Ascending aorta (tissue), 2 donors: ENCODE measurements at regions of chr3 and their contacts with region 1.

Region 1: GRCh38 chr3:130737622-130738021 is 9.0 kb downstream of the PIK3R4 start:
- DNase-seq: no peak
- H3K4me3 ChIP-seq: no peak overlapping the region
- H3K27ac ChIP-seq: no peak overlapping the region
- H3K4me1 ChIP-seq: peaks cover 0 to 2% of the 10 kb centered on the region in 2 donors
- H3K27me3 ChIP-seq: no peaks in the 10 kb centered on the region
- CTCF ChIP-seq: no peak

Region 2: GRCh38 chr3:130644628-130645253 is 92.9 kb before region 1 on chr3:
- intact Hi-C with region 1: no loop called
- DNase-seq: no peak
- H3K4me3 ChIP-seq: no peak overlapping the region
- H3K27ac ChIP-seq: no peak overlapping the region
- H3K4me1 ChIP-seq: no peaks in the 10 kb centered on the region
- H3K27me3 ChIP-seq: no peaks in the 10 kb centered on the region
- CTCF ChIP-seq: no peak

Region 3: DNA sequence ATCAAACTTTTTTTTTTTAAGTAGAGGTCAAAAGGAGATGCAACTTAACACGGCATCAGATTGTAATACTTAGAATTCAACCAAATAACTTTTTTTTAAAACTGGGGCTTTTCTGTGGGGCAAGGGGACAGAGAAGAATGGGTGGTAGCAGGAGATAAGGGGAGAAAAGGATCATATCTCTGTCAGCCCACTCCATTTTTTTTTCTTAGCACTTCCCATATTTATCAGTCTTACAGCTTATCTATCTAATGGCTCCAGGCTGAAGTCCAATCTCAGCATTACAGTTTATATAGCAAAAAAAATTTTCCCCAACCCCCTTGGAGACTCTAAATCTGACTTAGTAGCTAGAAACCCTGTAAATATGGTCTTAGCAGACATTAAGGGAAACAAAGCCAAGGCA is 60.3 kb before region 1 on chr3:
- intact Hi-C with region 1: no loop called
- DNase-seq: no peak
- H3K4me3 ChIP-seq: no peak overlapping the region
- H3K27ac ChIP-seq: no peak overlapping the region
- H3K4me1 ChIP-seq: no peaks in the 10 kb centered on the region
- H3K27me3 ChIP-seq: no peaks in the 10 kb centered on the region
- CTCF ChIP-seq: no peak

Region 4: GRCh38 chr3:130759699-130760338 is 22.2 kb after region 1 on chr3:
- intact Hi-C with region 1: loop called (anchors 1 kb)
- DNase-seq: peak in 1 of 2 donors; percentile 72
- H3K4me3 ChIP-seq: no peak overlapping the region
- H3K27ac ChIP-seq: no peak overlapping the region
- H3K4me1 ChIP-seq: no peaks in the 10 kb centered on the region
- H3K27me3 ChIP-seq: no peaks in the 10 kb centered on the region
- CTCF ChIP-seq: peak; percentile 51 to 77 (median 75)